ENCODE measurements at regions of chr2 and their contacts with region 1.

Region 1: GRCh38 chr2:27890146-27890923 is at the starts of genes BABAM2 and RBKS:
- DNase-seq: peak; percentile 74 to 82
- ATAC-seq: peak; percentile 87 to 92
- H3K4me3 ChIP-seq: peak within 1 kb of the TSS; percentile 74 to 88 (median 83)
- H3K27ac ChIP-seq: peak within 1 kb of the TSS; percentile 94 to 99 (median 96)
- H3K4me1 ChIP-seq: peaks cover 22 to 35% of the 10 kb centered on the region in 2 donors
- H3K27me3 ChIP-seq: no peaks in the 10 kb centered on the region
- CTCF ChIP-seq: peak in 1 of 5 experiments; percentile 21
- POLR2A ChIP-seq: peak; percentile 95 to 96
- total RNA-seq, gene BABAM2: 57.2 to 72.2 (median 67.5) TPM
- total RNA-seq, gene RBKS: 0.41 to 5.4 (median 3.0) TPM

Region 2: DNA sequence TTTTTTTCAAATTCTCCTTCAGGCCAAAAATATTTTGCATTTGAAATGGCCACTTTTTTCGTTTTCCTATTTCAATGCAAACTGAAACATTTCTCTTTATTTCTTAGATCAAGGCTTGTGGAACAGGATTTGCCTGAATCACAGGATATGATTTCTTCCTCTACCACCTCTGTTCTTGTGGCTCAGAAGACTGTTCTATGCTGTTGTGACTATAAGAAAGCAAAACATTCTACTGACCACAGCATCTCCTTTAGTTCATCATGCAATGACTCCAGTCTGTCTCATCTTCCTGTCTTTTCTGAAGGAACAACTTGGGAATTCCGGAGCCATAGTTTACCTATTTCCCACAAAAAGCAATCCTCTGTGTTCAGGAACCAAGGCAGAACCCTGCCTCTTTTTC is 323.7 kb before region 1 on chr2:
- in situ Hi-C with region 1: no loop called
- intact Hi-C with region 1: no loop called
- DNase-seq: no peak
- ATAC-seq: no peak
- H3K4me3 ChIP-seq: no peak overlapping the region
- H3K27ac ChIP-seq: no peak overlapping the region
- H3K4me1 ChIP-seq: no peaks in the 10 kb centered on the region
- H3K27me3 ChIP-seq: no peaks in the 10 kb centered on the region
- CTCF ChIP-seq: no peak
- POLR2A ChIP-seq: no peak

Region 3: GRCh38 chr2:27771548-27772335 is 118.6 kb before region 1 on chr2 and contains the start of gene MRPL33:
- in situ Hi-C with region 1: no loop called
- intact Hi-C with region 1: loop called (anchors 2 kb)
- DNase-seq: peak; percentile 92 to 94
- ATAC-seq: peak; percentile 91 to 94
- H3K4me3 ChIP-seq: peak within 1 kb of the TSS; percentile 66 to 98 (median 84)
- H3K27ac ChIP-seq: peak within 1 kb of the TSS; percentile 87 to 99 (median 92)
- H3K4me1 ChIP-seq: peaks cover 40 to 41% of the 10 kb centered on the region in 2 donors
- H3K27me3 ChIP-seq: no peaks in the 10 kb centered on the region
- CTCF ChIP-seq: peak in 2 of 5 experiments; percentile 7 to 9
- POLR2A ChIP-seq: peak; percentile 87 to 89
- total RNA-seq, gene MRPL33: 231 to 500 (median 388) TPM

Region 4: DNA sequence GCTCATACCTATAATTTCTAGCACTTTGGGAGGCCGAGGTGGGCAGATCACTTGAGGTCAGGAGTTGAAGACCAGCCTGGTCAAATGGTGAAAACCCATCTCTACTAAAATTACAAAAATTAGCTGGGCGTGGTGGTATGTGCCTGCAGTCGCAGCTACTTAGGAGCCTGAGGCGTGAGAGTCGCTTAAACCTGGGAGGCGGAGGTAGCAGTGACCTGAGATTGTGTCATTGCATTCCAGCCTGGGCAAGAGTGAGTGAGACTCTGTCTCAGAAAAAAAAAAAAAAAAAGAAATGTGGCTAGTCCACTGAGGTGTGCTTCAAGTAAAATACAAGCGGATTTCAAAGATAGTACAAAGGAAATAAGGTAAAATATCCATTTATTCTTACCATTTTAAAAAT is 46.3 kb before region 1 on chr2:
- in situ Hi-C with region 1: no loop called
- intact Hi-C with region 1: no loop called
- DNase-seq: no peak
- ATAC-seq: no peak
- H3K4me3 ChIP-seq: no peak overlapping the region
- H3K27ac ChIP-seq: peak overlapping the region in 3 of 4 donors; percentile 66 to 74 (median 70)
- H3K4me1 ChIP-seq: peaks cover 20 to 26% of the 10 kb centered on the region in 2 donors
- H3K27me3 ChIP-seq: no peaks in the 10 kb centered on the region
- CTCF ChIP-seq: no peak
- POLR2A ChIP-seq: no peak

Region 5: GRCh38 chr2:27954771-27955383 is 64.5 kb after region 1 on chr2:
- in situ Hi-C with region 1: no loop called
- intact Hi-C with region 1: loop called (anchors 2 kb)
- DNase-seq: peak; percentile 70 to 78
- ATAC-seq: peak; percentile 90 to 93
- H3K4me3 ChIP-seq: peak overlapping the region in 2 of 4 donors; percentile 3 to 6
- H3K27ac ChIP-seq: peak overlapping the region; percentile 72 to 81 (median 76)
- H3K4me1 ChIP-seq: peaks cover 52 to 57% of the 10 kb centered on the region in 2 donors
- H3K27me3 ChIP-seq: no peaks in the 10 kb centered on the region
- CTCF ChIP-seq: peak in 4 of 5 experiments; percentile 16 to 39 (median 38)
- POLR2A ChIP-seq: no peak

Region 6: GRCh38 chr2:28201671-28202180 is 311.4 kb after region 1 on chr2:
- in situ Hi-C with region 1: no loop called
- intact Hi-C with region 1: loop called (anchors 5 kb)
- DNase-seq: peak; percentile 85 to 93
- ATAC-seq: peak; percentile 92 to 94
- H3K4me3 ChIP-seq: no peak overlapping the region
- H3K27ac ChIP-seq: peak overlapping the region; percentile 75 to 87 (median 82)
- H3K4me1 ChIP-seq: peaks cover 25 to 38% of the 10 kb centered on the region in 2 donors
- H3K27me3 ChIP-seq: no peaks in the 10 kb centered on the region
- CTCF ChIP-seq: no peak
- POLR2A ChIP-seq: peak; percentile 47 to 64